Transverse colon (tissue), 4 donors: ENCODE measurements at regions of chr7 and their contacts with region 1.

Region 1: DNA sequence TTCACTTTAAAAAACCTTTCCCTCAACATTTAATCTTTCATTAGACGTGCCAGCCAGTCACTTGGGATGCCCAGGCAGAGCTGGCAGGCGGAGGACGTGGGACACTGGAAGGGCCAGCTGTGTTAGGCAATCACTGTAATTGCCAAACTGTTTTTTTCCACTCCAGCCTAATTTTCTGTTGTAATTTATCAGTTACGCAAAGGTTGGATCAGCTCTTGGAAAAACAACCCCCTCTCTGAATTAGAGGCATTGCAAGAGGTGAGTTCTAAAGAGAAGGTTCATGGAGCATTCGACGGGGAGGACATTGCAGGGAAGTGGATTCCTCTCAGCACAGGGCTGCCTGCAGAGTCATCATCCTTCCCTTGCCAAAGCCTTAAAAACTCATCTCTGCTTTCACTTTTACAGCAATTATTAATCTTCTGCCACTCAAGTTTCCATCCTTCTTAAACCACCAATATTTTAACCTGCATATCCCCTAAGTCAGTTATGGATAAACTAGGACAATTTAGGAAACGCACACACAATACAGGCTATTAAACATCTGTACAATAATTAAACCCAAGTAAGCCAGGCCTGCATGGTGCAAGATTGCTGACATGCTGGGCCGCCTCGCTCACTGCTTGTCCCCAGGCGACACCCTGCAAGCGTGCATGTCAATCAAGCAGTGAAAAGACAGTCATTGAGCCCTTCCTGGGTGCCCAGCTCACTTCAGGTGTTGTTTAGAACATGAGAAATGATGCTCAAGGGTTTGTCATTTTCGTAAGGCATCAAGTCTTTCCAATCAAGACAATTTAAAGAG is 272.3 kb upstream of the RNF32 start:
- DNase-seq: no peak
- H3K4me3 ChIP-seq: no peak overlapping the region
- H3K27ac ChIP-seq: no peak overlapping the region
- H3K4me1 ChIP-seq: no peaks in the 10 kb centered on the region
- H3K27me3 ChIP-seq: no peaks in the 10 kb centered on the region
- CTCF ChIP-seq: no peak
- EP300 ChIP-seq: no peak
- POLR2A ChIP-seq: no peak

Region 2: GRCh38 chr7:156257904-156258303 is 110.3 kb before region 1 on chr7:
- in situ Hi-C with region 1: loop called in 1 of 4 experiments (anchors 25 kb)
- intact Hi-C with region 1: no loop called
- DNase-seq: no peak
- H3K4me3 ChIP-seq: no peak overlapping the region
- H3K27ac ChIP-seq: no peak overlapping the region
- H3K4me1 ChIP-seq: no peaks in the 10 kb centered on the region
- H3K27me3 ChIP-seq: no peaks in the 10 kb centered on the region
- CTCF ChIP-seq: no peak
- EP300 ChIP-seq: no peak
- POLR2A ChIP-seq: no peak

Region 3: GRCh38 chr7:156334636-156335035 is 33.6 kb before region 1 on chr7:
- in situ Hi-C with region 1: no loop called
- intact Hi-C with region 1: loop called (anchors 1 kb)
- DNase-seq: no peak
- H3K4me3 ChIP-seq: no peak overlapping the region
- H3K27ac ChIP-seq: no peak overlapping the region
- H3K4me1 ChIP-seq: no peaks in the 10 kb centered on the region
- H3K27me3 ChIP-seq: no peaks in the 10 kb centered on the region
- CTCF ChIP-seq: no peak
- EP300 ChIP-seq: no peak
- POLR2A ChIP-seq: no peak